Activated naive CD4-positive, alpha-beta T cell treated with anti-CD3 and anti-CD28 coated beads for 36 hours (primary cell): ENCODE measurements at regions of chr7 and their contacts with region 1.

Region 1: GRCh38 chr7:148262721-148263229 is 327.8 kb upstream of the C7orf33 start:
- DNase-seq: peak; percentile 77
- H3K4me3 Mint-ChIP-seq: peak overlapping the region; percentile 23
- H3K27ac Mint-ChIP-seq: no peak overlapping the region
- H3K4me1 Mint-ChIP-seq: peaks cover 8% of the 10 kb centered on the region
- H3K27me3 Mint-ChIP-seq: peaks cover 9% of the 10 kb centered on the region

Region 2: GRCh38 chr7:147245292-147245691 is 1017.5 kb before region 1 on chr7:
- CTCF ChIA-PET with region 1: no interaction called
- intact Hi-C with region 1: loop called (anchors 5 kb)
- DNase-seq: peak; percentile 28
- H3K4me3 Mint-ChIP-seq: no peak overlapping the region
- H3K27ac Mint-ChIP-seq: no peak overlapping the region
- H3K4me1 Mint-ChIP-seq: no peaks in the 10 kb centered on the region
- H3K27me3 Mint-ChIP-seq: no peaks in the 10 kb centered on the region

Region 3: GRCh38 chr7:148242294-148242801 is 20.4 kb before region 1 on chr7:
- CTCF ChIA-PET with region 1: interaction called, 20 read pairs
- intact Hi-C with region 1: no loop called
- DNase-seq: peak; percentile 5
- H3K4me3 Mint-ChIP-seq: no peak overlapping the region
- H3K27ac Mint-ChIP-seq: no peak overlapping the region
- H3K4me1 Mint-ChIP-seq: peaks cover 4% of the 10 kb centered on the region
- H3K27me3 Mint-ChIP-seq: peaks cover 23% of the 10 kb centered on the region

Region 4: DNA sequence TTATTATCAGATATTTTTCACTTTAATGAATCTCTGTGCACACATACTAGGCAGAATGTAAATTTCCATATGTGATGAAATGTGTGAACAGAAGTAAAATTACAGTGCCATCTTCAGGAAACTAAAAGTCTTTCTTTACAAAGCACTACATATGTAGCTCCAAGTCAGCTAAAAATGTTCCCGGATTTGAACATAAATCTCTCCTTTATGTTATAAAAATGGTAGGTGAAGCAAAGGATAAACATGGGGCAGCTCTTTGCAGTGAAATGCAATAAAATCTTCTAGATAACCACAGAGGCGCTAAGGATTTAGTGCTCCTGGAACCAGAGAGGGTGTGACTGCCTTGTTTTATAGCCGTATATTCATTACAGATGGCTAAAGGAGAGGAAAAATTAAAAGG is 222.8 kb after region 1 on chr7:
- CTCF ChIA-PET with region 1: interaction called, 3 read pairs
- intact Hi-C with region 1: loop called (anchors 1 kb)
- DNase-seq: no peak
- H3K4me3 Mint-ChIP-seq: no peak overlapping the region
- H3K27ac Mint-ChIP-seq: no peak overlapping the region
- H3K4me1 Mint-ChIP-seq: peaks cover 3% of the 10 kb centered on the region
- H3K27me3 Mint-ChIP-seq: peaks cover 5% of the 10 kb centered on the region

Region 5: DNA sequence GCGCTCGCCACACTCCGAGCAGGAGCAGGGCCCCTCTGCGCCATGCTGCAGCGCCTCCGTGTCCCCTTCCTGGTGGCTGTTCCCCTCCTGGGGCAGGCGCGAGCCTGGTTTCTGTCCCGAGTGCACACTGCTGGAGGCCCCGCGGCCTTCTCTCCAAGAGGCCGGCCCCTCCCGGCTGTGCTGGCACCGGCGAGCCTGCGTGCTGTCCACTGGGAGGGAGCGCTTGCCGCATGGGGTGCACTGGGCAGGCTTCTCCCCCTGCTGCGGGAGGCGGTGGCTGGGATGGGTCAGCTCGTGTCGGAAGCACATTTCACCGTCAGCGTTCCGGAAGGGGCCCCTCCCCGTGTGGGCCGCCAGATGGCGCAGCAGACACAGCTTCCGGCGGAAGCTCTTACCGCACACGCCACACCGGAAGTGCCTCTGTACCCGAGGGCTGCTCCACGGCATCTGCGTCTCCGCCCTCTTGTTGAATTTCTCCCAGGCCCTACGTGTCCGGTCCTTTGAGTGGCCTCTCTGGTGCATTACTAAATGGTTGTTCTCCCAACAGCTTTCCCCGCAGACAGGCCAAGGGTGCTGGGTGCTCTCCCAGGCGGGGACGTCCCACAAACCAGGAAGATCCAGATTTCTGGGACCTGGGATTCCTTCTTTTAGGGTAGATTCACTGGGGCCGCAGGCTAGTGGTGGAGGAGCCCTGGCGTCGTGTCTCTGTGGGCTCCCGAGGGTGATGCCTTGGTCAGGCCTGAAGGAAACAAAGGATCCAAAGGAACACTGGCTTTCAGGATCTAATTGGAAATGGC is 809.1 kb after region 1 on chr7:
- CTCF ChIA-PET with region 1: no interaction called
- intact Hi-C with region 1: loop called (anchors 5 kb)
- DNase-seq: peak; percentile 33
- H3K4me3 Mint-ChIP-seq: peak overlapping the region; percentile 26
- H3K27ac Mint-ChIP-seq: no peak overlapping the region
- H3K4me1 Mint-ChIP-seq: peaks cover 8% of the 10 kb centered on the region
- H3K27me3 Mint-ChIP-seq: no peaks in the 10 kb centered on the region